ENCODE measurements at regions of chrX and their contacts with region 1.

Region 1: GRCh38 chrX:155056877-155057792 is 13.8 kb downstream of the CMC4 start:
- DNase-seq: no peak
- ATAC-seq: peak; percentile 97
- H3K4me3 ChIP-seq: peak overlapping the region; percentile 15 to 49
- H3K27ac ChIP-seq: 0 out of 2 replicates have a peak overlapping the region, but pooled peaks have one; percentile 29
- H3K4me1 ChIP-seq: peaks cover 7% of the 10 kb centered on the region
- H3K27me3 ChIP-seq: no peaks in the 10 kb centered on the region
- CTCF ChIP-seq: peak; percentile 87

Region 2: GRCh38 chrX:154918060-154918483 is 139.1 kb before region 1 on chrX:
- CTCF ChIA-PET with region 1: interaction called, 12 read pairs
- POLR2A ChIA-PET with region 1: no interaction called
- in situ Hi-C with region 1: no loop called
- intact Hi-C with region 1: loop called (anchors 2 kb)
- DNase-seq: peak; percentile 61
- ATAC-seq: peak; percentile 95
- H3K4me3 ChIP-seq: peak overlapping the region; percentile 33 to 55
- H3K27ac ChIP-seq: 0 out of 2 replicates have a peak overlapping the region, but pooled peaks have one; percentile 44
- H3K4me1 ChIP-seq: no peaks in the 10 kb centered on the region
- H3K27me3 ChIP-seq: no peaks in the 10 kb centered on the region
- CTCF ChIP-seq: peak; percentile 80

Region 3: DNA sequence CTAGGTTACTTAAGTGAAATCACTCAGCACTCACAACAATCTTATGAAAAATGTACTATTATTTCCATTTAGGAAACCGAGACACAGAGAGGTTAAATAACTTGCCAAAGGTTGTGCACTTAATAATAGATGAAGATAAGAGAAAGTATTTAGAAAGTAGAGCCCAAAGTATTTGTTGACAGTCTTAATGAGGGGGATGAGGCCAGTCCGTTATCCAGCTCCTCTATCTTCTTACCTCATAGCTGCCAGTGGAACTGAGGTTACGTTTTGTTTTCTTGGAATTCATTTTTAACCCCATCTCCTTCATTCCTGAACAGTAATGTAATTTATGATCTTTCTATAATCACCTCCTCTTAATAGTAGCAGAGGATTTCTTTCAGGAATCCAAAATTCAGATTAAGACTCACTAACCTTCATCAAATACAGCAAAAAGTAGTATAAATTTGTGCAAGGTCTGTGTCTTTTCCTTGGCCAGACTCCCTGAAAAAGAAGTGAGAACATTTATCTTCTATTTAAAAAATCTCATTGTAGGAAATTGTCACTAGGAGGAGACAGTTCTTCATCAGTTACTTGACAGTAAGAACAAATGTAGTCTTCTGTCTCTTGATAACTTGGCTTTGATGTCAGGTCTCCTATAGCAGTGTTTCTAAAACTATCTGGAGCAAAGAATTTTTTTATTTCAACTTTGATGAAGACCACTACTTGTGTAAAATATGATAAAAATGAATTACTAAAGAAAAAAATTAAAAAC is 70.1 kb before region 1 on chrX:
- CTCF ChIA-PET with region 1: interaction called, 5 read pairs
- POLR2A ChIA-PET with region 1: no interaction called
- in situ Hi-C with region 1: no loop called
- intact Hi-C with region 1: loop called (anchors 2 kb)
- DNase-seq: no peak
- ATAC-seq: no peak
- H3K4me3 ChIP-seq: no peak overlapping the region
- H3K27ac ChIP-seq: no peak overlapping the region
- H3K4me1 ChIP-seq: no peaks in the 10 kb centered on the region
- H3K27me3 ChIP-seq: no peaks in the 10 kb centered on the region; the same call in 1 of the 2 replicates
- CTCF ChIP-seq: peak; percentile 42; the same call in 1 of the 2 replicates

Region 4: DNA sequence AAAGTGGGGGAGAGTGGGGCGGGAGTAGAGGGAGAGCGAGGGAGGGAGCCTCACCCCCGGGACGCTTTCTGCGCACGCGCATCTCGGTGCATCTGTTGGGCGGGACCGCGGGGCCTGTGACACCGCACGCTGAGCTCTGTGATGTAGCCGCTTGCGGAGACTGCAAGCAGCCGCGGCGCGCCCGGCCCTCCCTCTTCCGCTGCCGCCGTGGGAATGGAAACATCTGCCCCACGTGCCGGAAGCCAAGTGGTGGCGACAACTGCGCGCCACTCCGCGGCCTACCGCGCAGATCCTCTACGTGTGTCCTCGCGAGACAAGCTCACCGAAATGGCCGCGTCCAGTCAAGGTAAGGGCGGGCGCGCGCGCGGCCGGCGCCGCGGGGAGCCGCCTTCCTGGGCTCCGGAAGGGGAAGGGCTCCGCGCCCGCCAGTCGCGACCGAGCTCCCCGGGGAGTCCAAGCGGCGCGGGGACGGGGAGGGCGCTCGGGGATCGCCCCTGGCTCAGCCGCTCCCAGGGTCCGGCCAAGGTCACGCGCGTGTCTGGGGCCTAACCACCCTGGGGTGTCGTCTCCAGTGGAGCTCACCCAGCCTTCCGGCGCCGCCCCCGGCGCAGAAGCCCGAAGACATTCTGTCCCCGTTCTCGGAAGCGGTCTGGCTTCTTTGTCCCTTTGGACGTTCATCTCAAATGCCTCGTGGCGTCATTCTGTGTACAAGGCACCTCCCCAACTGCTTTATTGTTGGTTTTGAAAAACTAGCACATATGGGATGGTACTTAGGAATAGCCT is 30.2 kb before region 1 on chrX and contains the start of gene FUNDC2:
- CTCF ChIA-PET with region 1: no interaction called
- POLR2A ChIA-PET with region 1: interaction called, 15 read pairs
- in situ Hi-C with region 1: no loop called
- intact Hi-C with region 1: no loop called
- DNase-seq: peak; percentile 85
- ATAC-seq: peak; percentile 95
- H3K4me3 ChIP-seq: peak within 1 kb of the TSS; percentile 72 to 89
- H3K27ac ChIP-seq: peak within 1 kb of the TSS; percentile 100
- H3K4me1 ChIP-seq: peaks cover 17% of the 10 kb centered on the region
- H3K27me3 ChIP-seq: no peaks in the 10 kb centered on the region
- CTCF ChIP-seq: no peak
- total RNA-seq, gene FUNDC2: 68.8 TPM

Measured in Panc1 (cell line).